Panc1 (cell line): ENCODE measurements at regions of chr11 and their contacts with region 1.

Region 1: DNA sequence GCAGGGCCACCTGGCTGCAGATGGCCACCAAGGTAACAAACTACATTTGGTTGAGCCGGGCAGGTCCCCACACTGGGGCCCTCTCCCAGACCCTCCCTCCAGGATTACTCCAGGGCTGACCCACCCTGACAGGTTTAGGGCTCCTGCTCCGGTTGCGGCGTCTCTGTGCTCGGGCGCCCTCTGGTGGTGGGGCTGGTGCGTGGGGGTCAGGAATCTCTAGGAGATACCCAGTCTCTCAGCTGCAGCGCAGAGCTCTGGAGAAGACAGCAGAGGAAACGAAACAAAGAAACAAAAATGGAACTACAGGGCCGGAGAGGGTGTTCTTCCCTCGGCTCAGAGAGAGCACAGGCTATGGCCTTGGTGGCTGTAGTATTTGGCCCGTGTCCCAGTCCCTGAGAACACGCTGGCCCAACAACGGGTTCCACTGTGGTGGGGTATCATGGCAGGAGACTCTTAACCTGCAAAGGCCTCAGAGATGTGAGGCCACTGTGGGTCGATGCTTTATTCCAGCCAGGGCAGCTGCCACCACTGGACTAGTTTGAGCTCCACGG is 2.4 kb downstream of the C11orf96 start:
- DNase-seq: no peak
- ATAC-seq: peak; percentile 74
- H3K4me3 ChIP-seq: peak overlapping the region in 1 of 2 experiments; percentile 55; a peak in 2 of 4 replicates
- H3K27ac ChIP-seq: no peak overlapping the region
- H3K4me1 ChIP-seq: peaks cover 7% of the 10 kb centered on the region; the same call in 1 of the 2 replicates
- H3K27me3 ChIP-seq: peaks cover 5% of the 10 kb centered on the region; the same call in 1 of the 2 replicates
- CTCF ChIP-seq: peak; percentile 95

Region 2: DNA sequence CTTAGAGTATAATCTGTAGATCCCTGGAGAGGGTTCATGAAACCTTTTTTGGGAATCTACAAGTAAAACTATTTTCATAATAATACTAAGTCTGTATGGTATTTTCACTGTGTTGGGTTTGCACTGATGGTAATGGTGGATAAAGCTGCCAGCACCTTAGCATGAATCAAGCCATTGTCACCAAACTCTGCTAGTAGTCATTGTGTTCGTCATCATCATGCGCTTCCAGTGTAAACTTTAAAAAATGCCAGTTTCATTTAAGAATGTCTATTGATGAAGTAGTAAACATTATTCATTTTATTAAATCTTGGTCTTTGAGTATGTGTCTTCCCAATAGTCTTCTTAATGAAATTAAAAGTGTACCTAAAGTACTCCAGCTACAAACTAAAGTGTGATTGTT is 49.2 kb before region 1 on chr11:
- CTCF ChIA-PET with region 1: interaction called, 3 read pairs
- POLR2A ChIA-PET with region 1: no interaction called
- in situ Hi-C with region 1: no loop called
- intact Hi-C with region 1: loop called (anchors 5 kb)
- DNase-seq: no peak
- ATAC-seq: no peak
- H3K4me3 ChIP-seq: no peak overlapping the region
- H3K27ac ChIP-seq: no peak overlapping the region
- H3K4me1 ChIP-seq: no peaks in the 10 kb centered on the region
- H3K27me3 ChIP-seq: no peaks in the 10 kb centered on the region
- CTCF ChIP-seq: no peak

Region 3: DNA sequence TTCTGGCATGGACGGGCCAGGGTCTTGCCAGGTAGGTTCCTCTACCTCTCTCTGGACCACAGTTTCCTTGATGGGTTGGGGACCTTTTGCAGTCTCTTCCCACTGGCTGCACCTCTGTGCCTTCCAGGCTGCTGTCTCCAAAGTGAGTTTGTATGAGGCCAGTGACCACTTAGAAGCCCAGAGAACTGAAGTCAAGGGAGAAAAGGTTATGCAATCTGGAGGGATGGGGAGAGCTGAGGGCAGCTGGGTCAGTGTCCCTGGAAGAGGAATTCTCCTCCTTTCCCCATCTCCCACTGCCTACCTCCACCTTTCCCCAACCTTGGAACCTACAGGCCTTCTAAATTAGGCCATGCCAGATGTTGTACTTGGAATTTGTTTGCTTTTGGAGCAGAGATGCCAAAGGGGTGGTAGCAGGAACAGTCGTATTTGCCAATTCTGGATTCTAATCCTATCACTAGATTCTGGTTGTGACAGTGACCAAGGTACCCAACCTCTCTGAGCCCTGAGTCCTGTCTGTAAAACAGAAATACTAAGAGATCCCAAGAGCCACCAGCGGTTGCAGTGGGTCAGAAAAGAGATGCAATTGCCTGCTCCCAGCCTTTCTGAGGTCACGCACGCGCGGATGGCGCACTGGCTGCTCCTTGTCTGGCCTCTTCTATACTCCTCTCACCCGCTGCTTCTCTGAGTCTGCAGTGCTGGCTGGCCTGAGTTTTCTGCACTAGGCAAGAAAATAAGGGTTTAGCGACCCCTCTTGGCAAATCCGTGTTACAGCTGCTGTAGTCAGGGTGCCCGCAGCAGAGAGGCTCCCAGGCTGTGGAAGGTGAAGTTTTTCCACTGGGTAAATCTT is 92.2 kb after region 1 on chr11:
- CTCF ChIA-PET with region 1: interaction called, 3 read pairs
- POLR2A ChIA-PET with region 1: no interaction called
- in situ Hi-C with region 1: no loop called
- intact Hi-C with region 1: loop called (anchors 10 kb)
- DNase-seq: peak; percentile 22
- ATAC-seq: peak; percentile 95
- H3K4me3 ChIP-seq: no peak overlapping the region
- H3K27ac ChIP-seq: no peak overlapping the region
- H3K4me1 ChIP-seq: no peaks in the 10 kb centered on the region
- H3K27me3 ChIP-seq: no peaks in the 10 kb centered on the region
- CTCF ChIP-seq: peak; percentile 84